ENCODE measurements at regions of chr5 and their contacts with region 1.

Region 1: DNA sequence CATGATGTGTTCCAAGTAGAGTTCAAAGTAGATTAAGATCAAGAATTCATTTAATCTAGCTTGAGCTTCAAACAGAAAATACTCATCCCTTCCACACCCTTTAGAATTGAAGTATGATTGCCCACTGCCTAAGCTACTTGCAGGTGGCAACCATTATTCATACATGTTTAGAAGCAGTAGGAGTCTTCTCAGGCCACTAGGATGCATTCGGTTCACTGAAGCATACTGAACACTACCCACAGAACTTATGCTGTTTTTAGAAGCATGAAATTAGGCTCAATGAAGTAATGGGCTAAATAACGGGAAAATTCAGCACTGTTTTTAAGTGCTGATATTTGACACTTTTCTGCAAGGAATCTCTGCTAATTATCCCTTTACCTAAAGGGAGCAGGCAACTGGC is 263.4 kb downstream of the DEPDC1B start:
- DNase-seq: no peak
- ATAC-seq: no peak
- H3K4me3 Mint-ChIP-seq: no peak overlapping the region
- H3K27ac Mint-ChIP-seq: no peak overlapping the region
- H3K4me1 Mint-ChIP-seq: no peaks in the 10 kb centered on the region
- H3K27me3 Mint-ChIP-seq: no peaks in the 10 kb centered on the region

Region 2: DNA sequence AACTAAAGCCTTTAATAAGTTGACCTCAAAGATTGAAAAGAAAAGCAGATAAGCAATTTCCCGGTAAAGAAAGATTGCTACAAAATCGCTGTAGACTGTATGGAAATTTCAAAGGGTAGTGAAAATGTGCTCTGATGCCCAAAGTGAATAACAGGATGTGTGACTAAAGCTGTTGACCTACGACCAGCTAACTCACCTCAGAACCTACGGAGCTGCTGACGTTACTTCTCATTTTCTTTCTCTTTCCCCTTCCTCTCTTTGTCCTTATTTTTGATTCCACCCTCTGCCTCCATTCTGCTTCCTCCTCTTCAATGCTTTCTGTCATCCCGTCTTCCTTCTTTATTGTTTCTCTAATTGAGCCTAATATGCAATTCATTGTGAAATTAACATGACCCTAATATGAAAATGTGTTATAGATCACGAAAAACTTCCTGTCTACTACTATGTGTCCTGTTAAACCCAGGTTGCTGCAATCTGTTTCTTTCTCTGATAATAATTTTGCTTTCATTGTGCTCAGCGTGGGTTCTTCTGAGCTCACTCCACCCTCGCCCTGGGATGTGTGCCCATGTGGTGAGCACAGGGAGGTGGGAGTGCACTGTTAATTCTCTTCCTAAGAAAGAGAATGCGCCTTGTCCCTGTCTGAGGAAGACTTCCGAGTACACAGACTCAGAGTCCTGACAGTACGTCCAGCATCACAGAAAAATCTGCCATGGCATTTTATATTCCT is 646.0 kb before region 1 on chr5:
- CTCF ChIA-PET with region 1: no interaction called
- POLR2A ChIA-PET with region 1: no interaction called
- intact Hi-C with region 1: no loop called
- DNase-seq: no peak
- ATAC-seq: peak; percentile 82
- H3K4me3 Mint-ChIP-seq: peak overlapping the region; percentile 55
- H3K27ac Mint-ChIP-seq: peak overlapping the region; percentile 82
- H3K4me1 Mint-ChIP-seq: peaks cover 25% of the 10 kb centered on the region
- H3K27me3 Mint-ChIP-seq: peaks cover 16% of the 10 kb centered on the region

Region 3: DNA sequence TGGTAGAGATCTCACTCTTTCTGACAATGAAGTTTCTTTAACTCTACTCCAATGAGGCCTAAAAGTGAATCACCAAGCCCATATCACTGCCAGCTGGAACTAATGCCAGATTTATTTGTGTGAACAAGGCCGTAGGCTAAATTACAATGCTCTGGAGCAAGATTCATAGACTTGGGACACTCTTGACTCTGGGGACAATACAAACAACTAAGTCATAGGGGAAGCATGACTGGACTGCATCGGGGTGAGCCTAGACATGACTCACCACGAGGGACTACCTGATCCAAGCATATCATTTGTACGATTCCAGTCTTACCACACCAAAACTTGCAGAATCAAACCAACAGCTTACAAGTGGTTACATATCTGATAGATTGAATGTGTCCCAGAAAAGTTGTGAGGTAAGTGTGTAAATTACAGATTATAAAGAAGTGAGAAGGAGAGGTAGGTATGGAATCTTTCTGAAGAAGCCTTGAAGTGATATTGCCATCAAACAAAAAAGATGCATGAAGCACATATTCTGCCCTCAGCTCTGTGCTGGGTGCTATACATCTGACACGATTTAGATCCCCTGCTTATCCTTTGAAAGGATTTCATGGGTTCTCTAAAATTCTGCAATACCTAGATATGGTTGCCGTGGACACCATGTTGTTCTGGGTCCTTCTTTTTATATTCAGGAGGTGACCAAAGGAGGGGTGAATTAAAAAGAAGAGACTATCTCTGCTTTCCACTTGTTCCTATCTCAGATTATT is 343.7 kb before region 1 on chr5:
- CTCF ChIA-PET with region 1: no interaction called
- POLR2A ChIA-PET with region 1: interaction called, 15 read pairs
- intact Hi-C with region 1: no loop called
- DNase-seq: no peak
- ATAC-seq: no peak
- H3K4me3 Mint-ChIP-seq: no peak overlapping the region
- H3K27ac Mint-ChIP-seq: no peak overlapping the region
- H3K4me1 Mint-ChIP-seq: no peaks in the 10 kb centered on the region
- H3K27me3 Mint-ChIP-seq: no peaks in the 10 kb centered on the region

Measured in activated CD4-positive, alpha-beta T cell treated with anti-CD3 and anti-CD28 coated beads for 36 hours (primary cell).